Activated T-helper 1 cell treated with anti-CD3 and anti-CD28 coated beads, Interleukin-12 subunit alpha, Interleukin-12 subunit beta, Interleukin-2, Interleukin-4 antibody, amounts not matched to agents 30 ng/mL and 10 ng/mL and 1 ng/mL, durations not matched to agents 14 hours and 24 hours and 36 hours (primary cell): ENCODE measurements at regions of chr13 and their contacts with region 1.

Region 1: GRCh38 chr13:27130979-27131623 is 40.5 kb downstream of the USP12 start:
- DNase-seq: peak; percentile 80
- H3K4me3 Mint-ChIP-seq: peak overlapping the region; percentile 60
- H3K27ac Mint-ChIP-seq: peak overlapping the region; percentile 77
- H3K4me1 Mint-ChIP-seq: peaks cover 89% of the 10 kb centered on the region
- H3K27me3 Mint-ChIP-seq: no peaks in the 10 kb centered on the region

Region 2: GRCh38 chr13:25901460-25902376 is 1229.4 kb before region 1 on chr13:
- intact Hi-C with region 1: loop called (anchors 5 kb)
- DNase-seq: peak; percentile 60
- H3K4me3 Mint-ChIP-seq: peak overlapping the region; percentile 15
- H3K27ac Mint-ChIP-seq: peak overlapping the region; percentile 61
- H3K4me1 Mint-ChIP-seq: peaks cover 23% of the 10 kb centered on the region
- H3K27me3 Mint-ChIP-seq: peaks cover 6% of the 10 kb centered on the region

Region 3: DNA sequence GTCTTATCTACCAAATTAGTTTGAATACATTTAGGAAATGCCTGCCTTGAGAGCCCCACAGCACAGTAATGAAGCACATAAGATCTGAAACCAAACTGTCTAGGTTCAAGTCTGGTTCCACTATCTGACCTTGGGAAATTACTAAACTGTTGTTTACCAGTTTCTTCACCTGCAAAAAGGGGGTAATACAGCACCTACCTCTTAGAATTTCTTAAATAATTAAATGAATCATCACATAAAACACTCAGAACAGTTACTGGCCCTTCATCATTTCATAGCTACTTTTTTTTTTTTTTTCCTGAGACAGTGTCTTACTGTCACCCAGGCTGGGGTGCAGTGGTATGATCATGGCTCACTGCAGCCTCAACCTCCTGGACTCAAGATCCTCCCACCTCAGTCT is 19.1 kb before region 1 on chr13:
- intact Hi-C with region 1: loop called (anchors 1 kb)
- DNase-seq: no peak
- H3K4me3 Mint-ChIP-seq: no peak overlapping the region
- H3K27ac Mint-ChIP-seq: no peak overlapping the region
- H3K4me1 Mint-ChIP-seq: peaks cover 27% of the 10 kb centered on the region
- H3K27me3 Mint-ChIP-seq: no peaks in the 10 kb centered on the region

Region 4: GRCh38 chr13:27194895-27195764 is 64.0 kb after region 1 on chr13:
- intact Hi-C with region 1: loop called (anchors 1 kb)
- DNase-seq: no peak
- H3K4me3 Mint-ChIP-seq: no peak overlapping the region
- H3K27ac Mint-ChIP-seq: peak overlapping the region; percentile 51
- H3K4me1 Mint-ChIP-seq: peaks cover 36% of the 10 kb centered on the region
- H3K27me3 Mint-ChIP-seq: peaks cover 8% of the 10 kb centered on the region

Region 5: GRCh38 chr13:27424246-27425157 is 293.4 kb after region 1 on chr13 and contains the start of gene GTF3A:
- intact Hi-C with region 1: loop called (anchors 1 kb)
- DNase-seq: peak; percentile 88
- H3K4me3 Mint-ChIP-seq: peak within 1 kb of the TSS; percentile 89
- H3K27ac Mint-ChIP-seq: peak within 1 kb of the TSS; percentile 98
- H3K4me1 Mint-ChIP-seq: peaks cover 37% of the 10 kb centered on the region
- H3K27me3 Mint-ChIP-seq: no peaks in the 10 kb centered on the region
- total RNA-seq, gene GTF3A: 255 and 264 TPM in 2 replicates

Region 6: DNA sequence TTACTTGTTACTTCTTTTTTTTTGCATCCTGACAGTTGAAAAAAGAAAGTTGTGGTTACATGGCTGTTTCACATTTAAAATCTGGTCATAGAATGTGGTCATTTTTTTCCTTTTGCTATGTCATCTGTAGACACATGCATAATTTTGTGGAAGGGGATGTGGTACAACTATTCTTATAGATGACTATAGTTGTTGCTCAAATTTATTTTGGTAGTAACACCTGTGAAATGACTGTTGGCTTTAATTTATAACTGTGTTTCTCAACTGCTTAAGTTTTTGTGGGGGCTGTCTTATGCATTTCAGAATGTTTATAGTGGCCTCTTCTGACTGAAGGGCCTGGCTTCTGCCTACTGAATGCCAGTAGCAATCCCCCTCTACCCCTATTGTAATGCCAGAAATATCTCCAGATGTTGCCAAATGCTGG is 1137.7 kb after region 1 on chr13:
- intact Hi-C with region 1: loop called (anchors 10 kb)
- DNase-seq: no peak
- H3K4me3 Mint-ChIP-seq: peak overlapping the region; percentile 49
- H3K27ac Mint-ChIP-seq: peak overlapping the region; percentile 70
- H3K4me1 Mint-ChIP-seq: peaks cover 27% of the 10 kb centered on the region
- H3K27me3 Mint-ChIP-seq: no peaks in the 10 kb centered on the region